ENCODE measurements at regions of chr5 and their contacts with region 1.

Region 1: GRCh38 chr5:139293504-139294373 is at the start of gene MATR3:
- DNase-seq: peak; percentile 85 to 92
- H3K4me3 ChIP-seq: peak within 1 kb of the TSS; percentile 94
- H3K27ac ChIP-seq: peak within 1 kb of the TSS; percentile 97
- H3K4me1 ChIP-seq: peaks cover 28% of the 10 kb centered on the region
- H3K27me3 ChIP-seq: no peaks in the 10 kb centered on the region
- CTCF ChIP-seq: no peak
- total RNA-seq, gene MATR3: 129 and 145 TPM in 2 replicates

Region 2: GRCh38 chr5:138438724-138439476 is 854.8 kb before region 1 on chr5 and contains the start of gene REEP2:
- CTCF ChIA-PET with region 1: no interaction called
- POLR2A ChIA-PET with region 1: no interaction called
- intact Hi-C with region 1: no loop called
- DNase-seq: peak in 1 of 2 experiments; percentile 36
- H3K4me3 ChIP-seq: peak within 1 kb of the TSS; percentile 52; the same call in 1 of the 2 replicates
- H3K27ac ChIP-seq: no peak within 1 kb of the TSS
- H3K4me1 ChIP-seq: 0 out of 2 replicates have a peak, but pooled peaks cover 4% of the 10 kb centered on the region
- H3K27me3 ChIP-seq: peaks cover 10% of the 10 kb centered on the region
- CTCF ChIP-seq: no peak
- total RNA-seq, gene REEP2: 0.87 and 1.3 TPM in 2 replicates

Region 3: DNA sequence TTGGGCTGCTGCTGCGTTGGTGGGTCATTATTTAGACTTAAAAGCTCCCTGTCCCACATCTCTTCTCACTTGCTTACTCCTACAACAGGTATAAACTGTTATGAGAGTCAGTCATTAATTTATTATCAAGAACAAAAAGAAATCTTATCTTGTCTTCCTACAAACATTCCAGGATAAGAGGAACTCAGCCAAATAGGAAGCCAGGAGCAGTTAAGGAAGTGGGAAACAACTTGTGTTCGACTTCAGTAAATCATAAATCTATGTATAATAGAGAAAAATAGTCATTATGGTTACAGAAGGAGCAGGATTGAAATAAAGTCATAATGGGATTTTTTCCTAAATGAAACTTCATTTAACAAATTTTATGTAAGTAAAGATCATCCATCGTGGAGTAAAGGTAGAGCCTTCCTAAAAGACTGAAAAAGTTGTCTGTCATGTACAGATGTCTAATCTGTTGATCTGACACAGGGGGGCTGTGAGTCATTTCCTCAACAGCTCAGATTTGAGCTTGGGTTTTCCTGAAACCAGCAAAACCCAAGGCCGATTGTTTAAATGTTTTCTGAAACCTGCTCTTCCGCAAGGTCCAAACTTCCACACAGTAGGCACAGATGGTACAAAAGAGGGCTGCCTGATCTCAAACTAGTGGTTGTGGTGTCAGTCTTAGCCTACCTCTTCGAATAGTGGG is 393.3 kb before region 1 on chr5:
- CTCF ChIA-PET with region 1: interaction called, 14 read pairs
- POLR2A ChIA-PET with region 1: no interaction called
- intact Hi-C with region 1: no loop called
- DNase-seq: peak in 1 of 2 experiments; percentile 6
- H3K4me3 ChIP-seq: no peak overlapping the region
- H3K27ac ChIP-seq: peak overlapping the region; percentile 46
- H3K4me1 ChIP-seq: peaks cover 19% of the 10 kb centered on the region
- H3K27me3 ChIP-seq: no peaks in the 10 kb centered on the region
- CTCF ChIP-seq: no peak

Region 4: DNA sequence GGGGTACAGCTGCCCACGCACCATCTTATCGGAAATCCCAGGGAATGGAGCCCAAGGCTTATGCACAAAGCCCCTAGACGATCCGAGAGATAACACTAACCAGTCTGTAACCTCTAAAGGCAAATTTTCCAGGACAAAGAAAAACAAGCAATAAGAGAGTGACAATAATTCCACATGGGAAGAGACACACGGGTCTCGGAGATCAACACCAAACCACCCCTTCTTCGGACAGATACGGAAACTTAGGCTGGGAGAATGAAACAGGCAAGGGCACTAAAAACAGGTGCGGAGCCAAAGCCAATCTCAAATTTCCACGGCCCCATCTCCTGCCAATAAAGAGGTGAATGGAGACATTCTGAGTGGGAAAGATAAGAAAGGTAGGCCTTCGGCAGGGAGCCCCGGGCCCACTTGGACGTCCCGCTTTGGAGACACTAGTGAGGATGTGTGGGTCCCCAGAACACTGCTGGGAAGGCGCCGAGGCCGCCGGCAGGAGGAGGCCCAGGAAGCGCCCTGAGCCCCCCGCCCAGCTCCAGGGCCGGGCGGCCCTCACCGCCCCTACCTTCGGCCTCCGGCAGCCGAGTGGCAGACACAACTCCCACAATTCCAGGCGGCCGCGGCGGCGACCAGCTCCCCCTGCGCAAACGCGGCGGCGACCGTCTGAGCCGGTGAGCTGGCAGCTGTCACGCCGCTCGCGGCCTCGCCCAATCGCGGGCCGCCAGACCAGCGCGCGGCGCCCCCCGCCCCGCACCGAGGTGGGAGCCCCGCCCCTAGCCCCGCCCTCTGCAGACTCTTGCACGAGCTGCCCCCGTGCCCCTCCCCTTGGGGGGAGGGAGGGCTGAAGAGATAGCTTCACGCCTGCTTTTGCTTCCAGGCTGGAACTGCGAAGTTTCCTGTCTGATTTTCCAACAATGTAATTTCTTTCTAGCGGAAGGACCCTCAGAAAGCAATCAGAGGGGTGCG is 95.7 kb before region 1 on chr5 and contains the start of gene SIL1:
- CTCF ChIA-PET with region 1: no interaction called
- POLR2A ChIA-PET with region 1: interaction called, 11 read pairs
- intact Hi-C with region 1: no loop called
- DNase-seq: peak; percentile 78 to 95
- H3K4me3 ChIP-seq: peak within 1 kb of the TSS; percentile 84
- H3K27ac ChIP-seq: peak within 1 kb of the TSS; percentile 65
- H3K4me1 ChIP-seq: peaks cover 15% of the 10 kb centered on the region
- H3K27me3 ChIP-seq: no peaks in the 10 kb centered on the region
- CTCF ChIP-seq: no peak
- total RNA-seq, gene SIL1: 40.4 and 46.5 TPM in 2 replicates

Region 5: GRCh38 chr5:139232147-139232724 is 61.5 kb before region 1 on chr5:
- CTCF ChIA-PET with region 1: no interaction called
- POLR2A ChIA-PET with region 1: interaction called, 26 read pairs
- intact Hi-C with region 1: no loop called
- DNase-seq: no peak
- H3K4me3 ChIP-seq: no peak overlapping the region
- H3K27ac ChIP-seq: no peak overlapping the region
- H3K4me1 ChIP-seq: no peaks in the 10 kb centered on the region
- H3K27me3 ChIP-seq: no peaks in the 10 kb centered on the region
- CTCF ChIP-seq: no peak

Region 6: DNA sequence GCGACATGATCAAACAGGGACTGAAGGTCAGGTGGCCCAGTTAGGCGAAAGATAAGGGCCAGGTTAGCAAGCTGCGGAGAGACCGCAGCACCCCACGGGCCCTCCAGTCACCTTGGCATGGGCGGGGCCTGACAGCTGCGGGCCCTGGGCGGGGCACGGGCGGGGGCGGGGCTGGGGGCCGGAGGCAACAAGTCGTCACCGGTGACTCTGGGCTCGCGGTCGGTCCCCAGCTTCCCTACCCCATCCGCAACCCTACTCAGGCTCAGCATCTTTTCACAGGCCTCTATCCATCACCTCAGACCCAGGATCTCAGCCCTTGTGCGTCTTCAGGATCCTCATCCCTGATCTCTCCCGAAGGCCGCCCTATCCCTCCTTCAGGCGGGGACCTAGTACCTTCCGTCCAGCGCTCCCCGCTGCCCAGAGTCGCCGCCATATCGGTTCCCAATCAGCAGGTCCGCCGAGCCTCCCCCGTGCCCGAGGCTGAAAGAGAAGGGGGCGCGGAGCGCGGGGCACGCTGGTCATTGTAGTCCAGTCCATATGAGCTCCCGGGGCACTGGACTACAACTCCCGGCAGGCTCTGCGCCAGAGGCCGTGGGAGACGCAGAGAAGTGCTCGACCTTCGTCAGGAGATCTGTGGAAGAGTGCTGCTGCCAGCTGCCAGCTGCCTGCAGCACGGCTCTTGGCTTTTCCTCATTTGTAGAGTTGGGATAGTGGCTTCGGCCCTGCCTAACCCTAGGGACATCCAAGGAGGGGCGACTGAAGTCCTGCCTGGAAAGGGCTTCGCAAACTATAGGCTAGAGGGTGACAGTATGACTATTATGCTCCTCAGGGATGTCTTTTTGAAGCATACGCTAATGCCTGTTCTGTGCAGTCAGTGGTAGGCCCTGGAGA is 145.5 kb after region 1 on chr5 and contains the start of gene DNAJC18:
- CTCF ChIA-PET with region 1: no interaction called
- POLR2A ChIA-PET with region 1: interaction called, 12 read pairs
- intact Hi-C with region 1: no loop called
- DNase-seq: peak; percentile 75 to 83
- H3K4me3 ChIP-seq: peak within 1 kb of the TSS; percentile 91
- H3K27ac ChIP-seq: peak within 1 kb of the TSS; percentile 70
- H3K4me1 ChIP-seq: peaks cover 11% of the 10 kb centered on the region
- H3K27me3 ChIP-seq: no peaks in the 10 kb centered on the region
- CTCF ChIP-seq: no peak
- total RNA-seq, gene DNAJC18: 8.9 and 9.3 TPM in 2 replicates